ENCODE measurements at regions of chr15 and their contacts with region 1.

Region 1: GRCh38 chr15:29435811-29436210 is 166.2 kb upstream of the NSMCE3 start:
- DNase-seq: no peak
- H3K4me3 ChIP-seq: no peak overlapping the region
- H3K27ac ChIP-seq: no peak overlapping the region
- H3K4me1 ChIP-seq: no peaks in the 10 kb centered on the region
- H3K27me3 ChIP-seq: no peaks in the 10 kb centered on the region
- CTCF ChIP-seq: no peak
- POLR2A ChIP-seq: no peak

Region 2: GRCh38 chr15:29364429-29365078 is 71.3 kb before region 1 on chr15:
- intact Hi-C with region 1: no loop called
- DNase-seq: no peak
- H3K4me3 ChIP-seq: no peak overlapping the region
- H3K27ac ChIP-seq: no peak overlapping the region
- H3K4me1 ChIP-seq: no peaks in the 10 kb centered on the region
- H3K27me3 ChIP-seq: no peaks in the 10 kb centered on the region
- CTCF ChIP-seq: no peak
- POLR2A ChIP-seq: no peak

Region 3: DNA sequence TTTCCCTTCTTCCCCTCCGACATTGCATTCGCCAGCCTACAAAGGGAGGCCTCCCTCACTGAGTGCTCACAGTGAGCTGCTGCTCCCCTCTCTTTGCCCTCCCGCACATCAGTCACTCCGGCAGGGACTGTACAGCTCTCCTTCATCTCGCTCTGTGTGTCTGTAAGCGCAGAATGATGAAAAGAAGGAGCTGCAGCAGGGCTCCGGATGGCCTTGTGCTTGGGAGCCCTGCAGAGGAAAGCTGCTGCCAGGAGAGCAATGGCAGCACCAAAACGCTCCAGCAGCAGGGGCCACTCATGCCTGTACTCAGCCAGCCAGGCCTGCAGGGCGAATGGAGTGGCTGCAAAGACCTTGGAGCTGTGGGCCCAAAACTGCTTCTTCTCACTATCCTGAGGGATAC is 59.2 kb before region 1 on chr15:
- intact Hi-C with region 1: no loop called
- DNase-seq: no peak
- H3K4me3 ChIP-seq: no peak overlapping the region
- H3K27ac ChIP-seq: no peak overlapping the region
- H3K4me1 ChIP-seq: no peaks in the 10 kb centered on the region
- H3K27me3 ChIP-seq: no peaks in the 10 kb centered on the region
- CTCF ChIP-seq: no peak
- POLR2A ChIP-seq: no peak

Region 4: GRCh38 chr15:29490747-29491471 is 55.1 kb after region 1 on chr15:
- intact Hi-C with region 1: loop called in 1 of 2 experiments (anchors 10 kb)
- DNase-seq: no peak
- H3K4me3 ChIP-seq: no peak overlapping the region
- H3K27ac ChIP-seq: no peak overlapping the region
- H3K4me1 ChIP-seq: no peaks in the 10 kb centered on the region
- H3K27me3 ChIP-seq: no peaks in the 10 kb centered on the region
- CTCF ChIP-seq: no peak
- POLR2A ChIP-seq: no peak

Measured in adrenal gland (tissue), 19 donors.